ENCODE measurements at regions of chr5 and their contacts with region 1.

Region 1: DNA sequence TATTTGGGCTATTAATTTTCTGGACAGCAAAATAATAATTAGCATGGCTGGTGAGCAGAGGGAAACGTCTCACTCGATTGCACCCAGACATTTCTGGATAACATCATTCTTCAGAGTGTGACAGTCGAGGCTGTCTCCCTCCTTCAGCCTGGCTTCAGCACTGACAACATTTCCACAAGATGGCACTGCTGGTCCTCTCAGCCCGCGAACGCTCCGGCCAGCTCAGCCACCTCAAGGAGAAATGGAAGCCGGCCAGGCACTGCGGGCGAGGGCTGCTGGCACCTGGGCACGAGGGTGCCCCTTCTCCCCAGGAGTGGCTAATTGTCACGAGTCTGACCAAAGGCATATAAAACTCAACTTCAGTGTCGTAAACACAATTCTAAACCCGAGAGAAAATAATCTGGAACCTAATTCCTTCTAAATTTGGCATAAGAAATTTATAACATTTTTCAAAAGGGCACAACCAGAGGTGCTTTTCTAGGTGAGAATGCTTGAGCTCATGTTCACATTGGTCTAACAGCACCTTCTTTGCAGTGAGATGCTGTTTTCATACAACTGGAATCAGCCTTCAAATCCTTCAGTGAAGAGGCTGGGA is 65.9 kb downstream of the DAP start:
- DNase-seq: peak; percentile 78
- ATAC-seq: peak; percentile 88 to 89

Region 2: DNA sequence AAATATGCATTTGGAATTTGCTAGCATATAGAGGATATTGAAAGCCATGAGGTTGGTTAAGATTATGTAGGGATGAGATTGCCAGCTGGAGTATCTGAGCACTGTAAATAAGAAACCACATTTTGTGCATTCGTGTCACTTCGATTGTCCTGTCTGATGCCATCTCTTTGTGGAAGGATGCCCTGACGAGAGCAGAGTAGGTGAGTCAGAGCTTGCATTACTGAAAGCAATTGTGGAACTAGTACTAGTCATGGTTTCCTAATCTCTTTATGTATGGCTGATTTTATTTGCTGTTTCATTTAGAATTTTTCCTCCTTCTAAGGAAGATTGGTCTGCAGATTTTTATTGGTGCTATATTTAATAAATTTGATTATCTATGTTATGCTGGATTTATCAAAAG is 1050.5 kb before region 1 on chr5:
- intact Hi-C with region 1: no loop called
- DNase-seq: no peak
- ATAC-seq: no peak

Region 3: GRCh38 chr5:10632110-10632761 is 62.9 kb before region 1 on chr5:
- intact Hi-C with region 1: no loop called
- DNase-seq: no peak
- ATAC-seq: no peak

Region 4: GRCh38 chr5:10801931-10802659 is 106.9 kb after region 1 on chr5:
- intact Hi-C with region 1: loop called in 1 of 2 experiments (anchors 10 kb)
- DNase-seq: no peak
- ATAC-seq: peak; percentile 55 to 56

Region 5: GRCh38 chr5:10856683-10857337 is 161.7 kb after region 1 on chr5:
- intact Hi-C with region 1: loop called in 1 of 2 experiments (anchors 10 kb)
- DNase-seq: peak; percentile 57
- ATAC-seq: peak; percentile 42 to 55

Region 6: DNA sequence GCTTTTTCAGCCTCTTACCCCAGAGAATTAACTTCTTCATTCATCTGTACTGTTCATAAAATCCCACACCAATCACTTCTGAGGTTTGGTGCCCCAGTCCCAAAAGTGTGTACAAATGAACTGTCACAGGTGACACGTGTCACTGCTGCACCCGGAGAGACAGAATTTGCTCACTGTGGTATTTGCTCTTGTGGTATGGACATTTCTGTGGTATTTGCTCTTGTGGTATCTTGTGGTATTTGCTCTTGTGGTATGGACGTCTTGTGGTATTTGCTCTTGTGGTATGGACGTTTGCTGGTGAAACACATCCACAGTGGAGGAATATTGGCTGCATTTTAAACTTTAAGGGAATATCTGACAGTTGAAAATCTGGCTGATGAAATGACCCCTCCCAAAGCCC is 280.8 kb after region 1 on chr5:
- intact Hi-C with region 1: loop called in 1 of 2 experiments (anchors 10 kb)
- DNase-seq: no peak
- ATAC-seq: no peak

Region 7: GRCh38 chr5:11619339-11620024 is 924.3 kb after region 1 on chr5:
- intact Hi-C with region 1: loop called in 1 of 2 experiments (anchors 10 kb)
- DNase-seq: no peak
- ATAC-seq: peak in 1 of 2 donors; percentile 59